Mammary epithelial cell (primary cell): ENCODE measurements at regions of chr4 and their contacts with region 1.

Region 1: DNA sequence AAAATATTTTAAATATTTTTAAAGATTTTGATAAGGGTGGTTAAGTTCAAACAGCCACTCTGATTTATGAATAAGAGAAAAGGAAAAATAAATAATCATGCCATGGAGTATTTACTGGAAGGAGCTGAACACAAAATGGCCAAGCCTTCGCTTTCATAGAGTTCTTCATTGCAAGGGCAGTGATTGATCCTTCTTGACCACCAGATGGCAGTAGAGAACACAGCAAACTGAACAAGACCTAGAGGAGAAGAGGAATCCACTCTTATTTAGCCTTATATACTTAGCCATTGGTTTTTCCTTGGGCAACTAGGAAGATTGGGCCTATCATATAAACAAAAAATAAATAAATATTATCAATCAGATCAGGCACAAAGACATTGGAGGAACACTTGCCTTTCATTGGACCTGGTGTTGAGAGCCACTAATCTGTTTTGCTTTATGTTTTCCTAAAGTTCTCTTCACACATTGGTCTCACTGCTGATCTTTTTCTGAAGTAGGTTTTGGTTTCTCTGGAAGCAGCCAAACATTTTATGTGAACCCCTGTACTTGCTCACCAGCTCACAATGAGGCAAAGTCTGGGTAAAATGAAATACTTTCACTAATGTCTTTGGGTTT is 58.1 kb upstream of the PARM1 start:
- DNase-seq: peak; percentile 66
- H3K4me3 ChIP-seq: no peak overlapping the region
- H3K27ac ChIP-seq: no peak overlapping the region
- H3K4me1 ChIP-seq: no peaks in the 10 kb centered on the region
- H3K27me3 ChIP-seq: peaks cover 4% of the 10 kb centered on the region
- CTCF ChIP-seq: peak; percentile 92 to 95

Region 2: GRCh38 chr4:75289914-75290582 is 415.2 kb after region 1 on chr4:
- CTCF ChIA-PET with region 1: interaction called, 3 read pairs
- dilution Hi-C with region 1: no loop called
- in situ Hi-C with region 1: no loop called
- intact Hi-C with region 1: loop called (anchors 1 kb)
- DNase-seq: peak; percentile 7
- H3K4me3 ChIP-seq: no peak overlapping the region
- H3K27ac ChIP-seq: no peak overlapping the region
- H3K4me1 ChIP-seq: no peaks in the 10 kb centered on the region
- H3K27me3 ChIP-seq: peaks cover 6% of the 10 kb centered on the region
- CTCF ChIP-seq: peak; percentile 41 to 54

Region 3: GRCh38 chr4:75469896-75470295 is 595.0 kb after region 1 on chr4:
- CTCF ChIA-PET with region 1: no interaction called
- dilution Hi-C with region 1: no loop called
- in situ Hi-C with region 1: no loop called
- intact Hi-C with region 1: loop called (anchors 2 kb)
- DNase-seq: no peak
- H3K4me3 ChIP-seq: no peak overlapping the region
- H3K27ac ChIP-seq: no peak overlapping the region
- H3K4me1 ChIP-seq: no peaks in the 10 kb centered on the region
- H3K27me3 ChIP-seq: no peaks in the 10 kb centered on the region
- CTCF ChIP-seq: no peak